ENCODE measurements at regions of chr2 and their contacts with region 1.

Region 1: DNA sequence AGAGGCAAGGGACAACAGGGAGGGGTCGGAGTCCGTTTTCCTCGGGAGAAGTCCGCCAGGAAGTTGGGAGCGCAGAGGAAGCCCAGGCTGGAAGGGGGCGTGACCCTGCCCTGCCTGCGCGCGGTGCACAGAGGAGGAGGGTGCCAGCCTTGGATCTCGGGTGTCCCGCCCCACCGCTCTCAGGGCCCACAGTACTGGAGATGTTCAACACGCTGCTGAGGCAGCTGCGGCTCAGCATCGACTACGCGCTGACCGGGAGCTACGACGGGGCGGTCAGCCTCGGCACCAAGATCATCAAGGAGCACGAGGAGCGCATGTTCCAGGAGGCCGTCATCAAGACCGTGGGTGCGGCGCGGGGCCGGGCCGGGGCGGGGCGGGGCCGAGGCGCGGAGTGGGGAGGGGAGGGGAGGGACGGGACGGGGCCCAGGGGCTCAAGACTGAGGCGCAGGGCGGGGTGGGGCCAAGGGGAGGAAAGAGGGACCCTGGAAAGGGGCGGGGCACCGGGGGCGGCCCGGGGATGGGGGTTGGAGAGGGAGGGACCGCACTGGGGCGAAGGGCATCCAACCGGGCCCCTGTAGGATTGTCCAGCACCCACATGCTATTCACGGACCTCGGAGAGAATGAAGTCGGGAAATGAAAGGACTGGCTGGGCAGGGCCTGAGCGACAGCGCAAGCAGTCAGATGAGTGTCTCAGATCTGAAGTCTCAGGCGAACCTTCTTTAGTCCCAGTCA is 36.6 kb downstream of the POMC start:
- DNase-seq: no peak
- H3K4me3 Mint-ChIP-seq: no peak overlapping the region
- H3K27ac Mint-ChIP-seq: no peak overlapping the region
- H3K4me1 Mint-ChIP-seq: no peaks in the 10 kb centered on the region
- H3K27me3 Mint-ChIP-seq: peaks cover 67% of the 10 kb centered on the region
- CTCF ChIP-seq: no peak

Region 2: GRCh38 chr2:25041928-25042320 is 89.8 kb before region 1 on chr2 and contains the start of gene EFR3B:
- CTCF ChIA-PET with region 1: no interaction called
- POLR2A ChIA-PET with region 1: no interaction called
- intact Hi-C with region 1: loop called (anchors 5 kb)
- DNase-seq: peak; percentile 93
- H3K4me3 Mint-ChIP-seq: peak within 1 kb of the TSS; percentile 70
- H3K27ac Mint-ChIP-seq: no peak within 1 kb of the TSS
- H3K4me1 Mint-ChIP-seq: peaks cover 5% of the 10 kb centered on the region
- H3K27me3 Mint-ChIP-seq: peaks cover 37% of the 10 kb centered on the region
- CTCF ChIP-seq: no peak
- total RNA-seq, gene EFR3B: 0.09 and 0.10 TPM in 2 replicates

Region 3: GRCh38 chr2:25572638-25573037 is 440.9 kb after region 1 on chr2:
- CTCF ChIA-PET with region 1: no interaction called
- POLR2A ChIA-PET with region 1: no interaction called
- intact Hi-C with region 1: no loop called
- DNase-seq: no peak
- H3K4me3 Mint-ChIP-seq: no peak overlapping the region
- H3K27ac Mint-ChIP-seq: no peak overlapping the region
- H3K4me1 Mint-ChIP-seq: no peaks in the 10 kb centered on the region
- H3K27me3 Mint-ChIP-seq: no peaks in the 10 kb centered on the region
- CTCF ChIP-seq: no peak

Measured in MCF 10A (cell line).